GM12878 (cell line): ENCODE measurements at regions of chr11 and their contacts with region 1.

Region 1: GRCh38 chr11:102914238-102915043 is 39.7 kb upstream of the MMP12 start:
- DNase-seq: no peak
- ATAC-seq: peak; percentile 85
- H3K4me3 ChIP-seq: no peak overlapping the region
- H3K27ac ChIP-seq: no peak overlapping the region
- H3K4me1 ChIP-seq: no peaks in the 10 kb centered on the region
- H3K27me3 ChIP-seq: peaks cover 0 to 2% of the 10 kb centered on the region in 2 experiments; a peak in 1 of 4 replicates
- CTCF ChIP-seq: peak; percentile 50 to 74 (median 64); a peak in 5 of 6 replicates
- EP300 ChIP-seq: no peak
- POLR2A ChIP-seq: no peak
- RAD21 ChIP-seq: peak; percentile 51

Region 2: GRCh38 chr11:102794447-102794781 is 120.0 kb before region 1 on chr11:
- CTCF ChIA-PET with region 1: interaction called, 12 read pairs
- POLR2A ChIA-PET with region 1: no interaction called
- RAD21 ChIA-PET with region 1: interaction called, 6 read pairs
- SMC1A ChIA-PET with region 1: interaction called, 12 read pairs
- in situ Hi-C with region 1: no loop called
- intact Hi-C with region 1: no loop called
- DNase-seq: no peak
- ATAC-seq: peak; percentile 99
- H3K4me3 ChIP-seq: no peak overlapping the region
- H3K27ac ChIP-seq: no peak overlapping the region
- H3K4me1 ChIP-seq: no peaks in the 10 kb centered on the region
- H3K27me3 ChIP-seq: no peaks in the 10 kb centered on the region; a peak in 1 of 4 replicates
- CTCF ChIP-seq: peak; percentile 57 to 66 (median 57)
- EP300 ChIP-seq: no peak
- POLR2A ChIP-seq: no peak
- RAD21 ChIP-seq: peak; percentile 55

Region 3: GRCh38 chr11:102933627-102934026 is 19.2 kb after region 1 on chr11:
- CTCF ChIA-PET with region 1: interaction called, 160 read pairs
- POLR2A ChIA-PET with region 1: interaction called, 71 read pairs
- RAD21 ChIA-PET with region 1: interaction called, 140 read pairs
- SMC1A ChIA-PET with region 1: interaction called, 177 read pairs
- in situ Hi-C with region 1: no loop called
- intact Hi-C with region 1: no loop called
- DNase-seq: peak; percentile 53
- ATAC-seq: peak; percentile 81
- H3K4me3 ChIP-seq: no peak overlapping the region
- H3K27ac ChIP-seq: no peak overlapping the region
- H3K4me1 ChIP-seq: no peaks in the 10 kb centered on the region
- H3K27me3 ChIP-seq: 0 out of 4 replicates have a peak, but pooled peaks cover 0 to under 1% of the 10 kb centered on the region in 2 experiments
- CTCF ChIP-seq: peak in 1 of 3 experiments; percentile 15; a peak in 1 of 6 replicates
- EP300 ChIP-seq: peak in 1 of 2 experiments; percentile 63; a peak in 1 of 4 replicates
- POLR2A ChIP-seq: no peak
- RAD21 ChIP-seq: no peak

Region 4: GRCh38 chr11:102946237-102946636 is 31.8 kb after region 1 on chr11:
- CTCF ChIA-PET with region 1: interaction called, 334 read pairs
- POLR2A ChIA-PET with region 1: interaction called, 10 read pairs
- RAD21 ChIA-PET with region 1: interaction called, 110 read pairs
- SMC1A ChIA-PET with region 1: interaction called, 216 read pairs
- in situ Hi-C with region 1: no loop called
- intact Hi-C with region 1: loop called (anchors 1 kb)
- DNase-seq: no peak
- ATAC-seq: no peak
- H3K4me3 ChIP-seq: no peak overlapping the region
- H3K27ac ChIP-seq: no peak overlapping the region
- H3K4me1 ChIP-seq: no peaks in the 10 kb centered on the region
- H3K27me3 ChIP-seq: no peaks in the 10 kb centered on the region
- CTCF ChIP-seq: no peak
- EP300 ChIP-seq: no peak
- POLR2A ChIP-seq: no peak
- RAD21 ChIP-seq: no peak

Region 5: GRCh38 chr11:103055221-103055890 is 140.9 kb after region 1 on chr11:
- CTCF ChIA-PET with region 1: interaction called, 24 read pairs
- POLR2A ChIA-PET with region 1: interaction called, 3 read pairs
- RAD21 ChIA-PET with region 1: interaction called, 13 read pairs
- SMC1A ChIA-PET with region 1: interaction called, 25 read pairs
- in situ Hi-C with region 1: no loop called
- intact Hi-C with region 1: loop called (anchors 2 kb)
- DNase-seq: no peak
- ATAC-seq: peak; percentile 87
- H3K4me3 ChIP-seq: no peak overlapping the region
- H3K27ac ChIP-seq: no peak overlapping the region
- H3K4me1 ChIP-seq: no peaks in the 10 kb centered on the region
- H3K27me3 ChIP-seq: no peaks in the 10 kb centered on the region
- CTCF ChIP-seq: peak; percentile 58 to 68 (median 58)
- EP300 ChIP-seq: no peak
- POLR2A ChIP-seq: no peak
- RAD21 ChIP-seq: peak; percentile 73

Region 6: DNA sequence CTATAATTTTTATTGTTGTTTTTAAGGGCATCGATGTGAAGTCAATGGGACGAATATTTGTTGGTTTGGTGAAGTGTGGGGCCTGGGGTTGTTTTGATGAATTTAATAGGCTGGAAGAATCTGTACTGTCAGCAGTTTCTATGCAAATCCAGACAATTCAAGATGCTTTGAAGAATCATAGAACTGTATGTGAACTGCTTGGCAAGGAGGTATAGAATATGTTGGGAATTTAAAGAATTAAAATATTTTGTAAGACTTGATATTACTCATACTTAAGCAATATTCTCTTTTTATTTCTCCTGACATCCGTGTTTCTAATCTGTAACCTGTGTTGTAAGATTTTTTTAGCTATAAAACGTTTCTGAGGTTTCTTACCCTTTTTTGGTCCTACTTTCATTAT is 256.4 kb after region 1 on chr11:
- CTCF ChIA-PET with region 1: no interaction called
- POLR2A ChIA-PET with region 1: no interaction called
- RAD21 ChIA-PET with region 1: no interaction called
- SMC1A ChIA-PET with region 1: no interaction called
- in situ Hi-C with region 1: no loop called
- intact Hi-C with region 1: no loop called
- DNase-seq: no peak
- ATAC-seq: no peak
- H3K4me3 ChIP-seq: no peak overlapping the region
- H3K27ac ChIP-seq: no peak overlapping the region
- H3K4me1 ChIP-seq: no peaks in the 10 kb centered on the region
- H3K27me3 ChIP-seq: no peaks in the 10 kb centered on the region
- CTCF ChIP-seq: no peak
- EP300 ChIP-seq: no peak
- POLR2A ChIP-seq: no peak
- RAD21 ChIP-seq: no peak